ENCODE measurements at regions of chr20 and their contacts with region 1.

Region 1: GRCh38 chr20:38645980-38646858 is 44.6 kb downstream of the ARHGAP40 start:
- DNase-seq: peak; percentile 70 to 78 (median 74)
- ATAC-seq: peak; percentile 78
- H3K4me3 ChIP-seq: no peak overlapping the region
- H3K27ac ChIP-seq: no peak overlapping the region
- H3K4me1 ChIP-seq: peaks cover 9% of the 10 kb centered on the region
- H3K27me3 ChIP-seq: peaks cover 0 to 8% of the 10 kb centered on the region in 2 donors
- CTCF ChIP-seq: peak; percentile 88 to 94 (median 93)
- POLR2A ChIP-seq: no peak

Region 2: DNA sequence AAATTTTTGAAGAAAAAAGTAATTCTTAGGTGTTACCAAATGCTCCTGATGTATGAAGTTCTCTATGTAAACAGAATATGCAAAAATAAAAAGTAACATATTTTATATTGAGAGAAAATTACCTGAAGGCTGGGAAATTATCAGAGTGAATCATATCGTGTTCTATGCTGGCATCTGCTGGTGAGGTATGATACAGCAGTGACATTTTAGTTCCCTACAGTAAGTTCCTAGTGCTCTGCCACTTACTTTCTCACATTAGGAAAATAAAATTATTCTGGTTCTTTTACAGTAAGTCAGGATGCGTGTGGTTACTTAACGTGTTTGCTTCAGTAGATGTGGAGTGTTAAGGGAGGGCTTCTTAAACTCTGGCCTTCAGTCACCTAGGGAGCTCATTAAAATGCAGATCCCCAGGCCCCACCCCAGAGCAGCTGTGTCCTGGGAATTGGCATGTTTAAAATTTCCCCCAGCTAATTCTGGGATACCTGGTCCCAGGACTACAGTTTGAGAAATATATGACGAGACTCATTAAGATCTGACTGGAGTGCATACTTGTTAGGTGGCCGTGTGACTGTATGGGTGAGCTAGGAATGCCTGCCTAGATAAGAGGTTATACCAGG is 105.2 kb after region 1 on chr20:
- intact Hi-C with region 1: loop called (anchors 5 kb)
- DNase-seq: peak in 2 of 4 donors; percentile 28
- ATAC-seq: no peak
- H3K4me3 ChIP-seq: no peak overlapping the region
- H3K27ac ChIP-seq: no peak overlapping the region
- H3K4me1 ChIP-seq: peaks cover 13% of the 10 kb centered on the region
- H3K27me3 ChIP-seq: no peaks in the 10 kb centered on the region
- CTCF ChIP-seq: peak; percentile 26 to 71 (median 68)
- POLR2A ChIP-seq: no peak

Region 3: DNA sequence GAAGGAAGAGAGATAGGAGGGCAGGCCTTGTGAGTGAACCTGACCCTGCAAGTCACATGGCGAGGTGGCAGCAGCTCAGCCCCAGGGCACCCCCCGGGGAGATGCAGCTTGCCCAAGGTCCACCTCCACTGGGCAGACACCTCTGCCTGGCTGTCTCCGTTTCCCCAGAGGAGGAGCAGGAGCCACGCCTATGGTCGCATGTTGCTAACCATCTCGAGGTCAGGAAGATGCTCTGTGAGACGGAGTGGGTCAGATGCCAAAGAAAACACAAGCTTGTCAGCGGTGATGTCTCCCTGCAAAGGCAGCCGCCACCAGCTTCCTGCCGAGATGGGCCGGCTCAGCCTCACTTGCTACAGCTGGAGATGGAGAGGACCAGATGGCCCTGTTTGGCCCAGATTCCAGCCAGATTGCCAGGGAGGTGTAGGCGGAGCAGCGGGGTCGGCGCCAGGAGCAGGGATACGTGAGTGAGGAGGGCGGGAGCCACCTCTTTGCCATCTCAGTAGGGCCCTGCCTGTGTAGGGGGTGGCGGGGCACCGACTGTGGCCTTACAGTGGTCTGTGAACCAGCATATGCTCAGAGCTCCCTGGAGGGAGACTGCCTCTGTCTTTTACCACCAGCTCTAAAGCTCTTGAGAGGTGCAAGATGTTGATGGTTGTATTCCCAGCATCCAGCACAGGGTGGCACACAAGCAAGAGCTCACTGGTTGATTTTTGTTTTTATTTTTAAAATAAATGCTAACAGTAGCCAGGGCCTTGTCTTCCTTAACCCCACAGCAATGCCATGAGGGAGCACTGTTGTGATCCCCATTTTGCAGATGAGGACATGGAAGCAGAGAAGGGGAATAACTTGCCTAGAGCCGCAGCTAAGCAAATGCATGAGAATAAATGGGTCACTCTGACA is 237.1 kb after region 1 on chr20:
- intact Hi-C with region 1: loop called (anchors 10 kb)
- DNase-seq: peak in 2 of 4 donors; percentile 16 to 23
- ATAC-seq: no peak
- H3K4me3 ChIP-seq: no peak overlapping the region
- H3K27ac ChIP-seq: no peak overlapping the region
- H3K4me1 ChIP-seq: no peaks in the 10 kb centered on the region
- H3K27me3 ChIP-seq: no peaks in the 10 kb centered on the region
- CTCF ChIP-seq: no peak
- POLR2A ChIP-seq: no peak

Region 4: GRCh38 chr20:38918172-38918571 is 272.0 kb after region 1 on chr20:
- intact Hi-C with region 1: no loop called
- DNase-seq: no peak
- ATAC-seq: no peak
- H3K4me3 ChIP-seq: no peak overlapping the region
- H3K27ac ChIP-seq: no peak overlapping the region
- H3K4me1 ChIP-seq: no peaks in the 10 kb centered on the region
- H3K27me3 ChIP-seq: no peaks in the 10 kb centered on the region
- CTCF ChIP-seq: no peak
- POLR2A ChIP-seq: no peak

Region 5: GRCh38 chr20:39049684-39050554 is 403.7 kb after region 1 on chr20:
- intact Hi-C with region 1: loop called (anchors 10 kb)
- DNase-seq: peak; percentile 77 to 79 (median 79)
- ATAC-seq: peak; percentile 88
- H3K4me3 ChIP-seq: peak overlapping the region; percentile 42 to 53
- H3K27ac ChIP-seq: peak overlapping the region in 2 of 4 donors; percentile 41 to 45
- H3K4me1 ChIP-seq: peaks cover 13% of the 10 kb centered on the region
- H3K27me3 ChIP-seq: no peaks in the 10 kb centered on the region
- CTCF ChIP-seq: peak; percentile 92 to 99 (median 96)
- POLR2A ChIP-seq: peak in 2 of 3 donors; percentile 46 to 50

Measured in body of pancreas (tissue), 4 donors.